ENCODE measurements at regions of chr6 and their contacts with region 1.

Region 1: GRCh38 chr6:100099189-100100074 is 105.4 kb upstream of the MCHR2 start:
- DNase-seq: no peak
- H3K4me3 ChIP-seq: no peak overlapping the region
- H3K27ac ChIP-seq: no peak overlapping the region
- H3K4me1 ChIP-seq: no peaks in the 10 kb centered on the region
- H3K27me3 ChIP-seq: no peaks in the 10 kb centered on the region
- CTCF ChIP-seq: peak; percentile 43

Region 2: DNA sequence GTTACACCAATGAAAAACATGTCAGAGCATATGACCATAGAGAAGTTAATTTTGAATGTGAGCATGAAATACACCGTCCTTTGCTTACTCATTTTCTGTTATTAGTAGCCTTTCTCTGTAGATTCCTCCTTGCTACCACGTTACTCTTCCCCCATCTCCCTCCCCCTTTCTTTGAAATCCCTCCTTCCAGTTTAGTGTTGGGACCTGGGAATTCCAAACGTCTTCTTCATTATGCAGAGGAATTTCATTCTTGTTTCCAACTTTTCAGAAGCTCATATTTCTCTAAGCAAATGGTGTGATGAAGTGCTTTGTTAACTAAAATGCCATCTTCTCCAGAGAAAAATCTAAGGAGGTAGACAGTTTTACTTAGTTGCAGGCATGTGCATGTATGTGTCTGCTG is 227.8 kb before region 1 on chr6:
- intact Hi-C with region 1: loop called (anchors 5 kb)
- DNase-seq: no peak
- H3K4me3 ChIP-seq: no peak overlapping the region
- H3K27ac ChIP-seq: no peak overlapping the region
- H3K4me1 ChIP-seq: no peaks in the 10 kb centered on the region
- H3K27me3 ChIP-seq: no peaks in the 10 kb centered on the region
- CTCF ChIP-seq: no peak

Region 3: GRCh38 chr6:100001915-100002388 is 97.5 kb before region 1 on chr6:
- intact Hi-C with region 1: loop called (anchors 5 kb)
- DNase-seq: peak; percentile 21
- H3K4me3 ChIP-seq: no peak overlapping the region
- H3K27ac ChIP-seq: no peak overlapping the region
- H3K4me1 ChIP-seq: no peaks in the 10 kb centered on the region
- H3K27me3 ChIP-seq: no peaks in the 10 kb centered on the region
- CTCF ChIP-seq: peak; percentile 84